Endothelial cell of umbilical vein (primary cell): ENCODE measurements at regions of chr14 and their contacts with region 1.

Region 1: DNA sequence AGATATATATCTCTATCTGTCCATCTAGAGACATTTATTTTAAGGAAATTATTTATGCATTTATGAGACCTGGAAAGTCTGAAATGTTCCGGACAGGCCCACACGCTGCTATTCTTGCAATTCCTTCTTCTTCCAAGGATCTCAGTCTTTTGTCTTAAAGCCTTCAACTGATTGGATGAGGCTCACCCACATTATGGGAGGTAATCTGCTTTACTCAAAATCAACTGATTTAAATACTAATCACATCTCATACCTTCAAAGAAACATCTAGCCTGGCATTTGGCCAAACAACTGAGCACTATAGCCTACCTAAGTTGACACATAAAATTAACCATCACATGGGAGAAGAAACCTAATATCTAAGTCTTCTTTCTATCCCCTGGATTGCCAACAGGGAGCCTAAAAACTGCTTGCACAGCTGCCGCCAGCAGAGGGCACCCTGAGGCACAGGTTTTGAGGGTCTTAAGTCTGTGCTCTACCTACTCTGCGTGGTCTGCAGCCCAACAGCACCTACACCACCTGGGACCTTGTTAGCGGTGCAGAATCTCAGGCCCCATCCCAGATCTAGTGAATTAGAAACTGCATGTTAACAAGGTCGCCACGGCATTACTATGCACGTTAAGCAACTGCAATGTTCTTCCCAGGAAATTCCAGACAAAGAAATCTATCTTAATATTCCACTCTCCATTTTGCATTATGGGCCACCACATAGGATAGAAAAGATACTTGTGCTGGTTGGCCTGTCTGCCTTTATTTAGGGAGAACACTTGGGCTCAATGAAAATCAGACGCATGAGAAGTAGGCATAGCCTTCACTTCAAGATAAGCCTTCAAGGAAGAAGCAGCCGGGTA is 249.7 kb downstream of the FOXG1 start:
- DNase-seq: peak; percentile 60
- H3K4me3 ChIP-seq: no peak overlapping the region
- H3K27ac ChIP-seq: no peak overlapping the region
- H3K4me1 ChIP-seq: no peaks in the 10 kb centered on the region
- H3K27me3 ChIP-seq: peaks cover 0 to 4% of the 10 kb centered on the region in 2 experiments
- CTCF ChIP-seq: peak; percentile 69 to 75
- POLR2A ChIP-seq: no peak

Region 2: DNA sequence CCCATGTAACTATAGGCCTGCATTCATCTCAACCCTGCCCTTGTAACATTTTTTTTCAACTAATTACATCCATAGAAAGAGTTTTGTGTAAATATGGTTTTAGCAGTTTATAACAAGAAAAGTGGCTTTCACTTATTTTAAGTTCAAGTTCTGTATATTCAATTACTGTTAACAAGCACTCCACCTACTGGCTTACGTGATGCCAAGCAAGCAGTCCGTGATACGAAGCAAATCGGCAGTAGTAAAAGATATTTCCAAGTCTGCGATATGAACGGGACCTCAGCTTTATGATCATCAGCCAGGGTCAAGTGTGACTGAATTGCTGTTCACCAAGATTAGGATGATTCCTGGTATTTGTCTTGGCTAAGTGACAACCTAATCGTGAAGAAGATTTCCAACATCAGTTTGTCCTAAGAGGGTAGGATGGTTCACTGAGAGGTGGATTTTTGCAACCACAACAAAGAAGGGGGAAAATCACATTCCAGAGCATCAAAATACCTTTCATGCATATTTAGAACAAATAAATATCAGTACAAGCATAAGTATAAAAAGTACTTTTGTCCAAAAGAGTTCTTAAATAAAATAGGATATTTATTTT is 206.5 kb after region 1 on chr14:
- CTCF ChIA-PET with region 1: no interaction called
- POLR2A ChIA-PET with region 1: no interaction called
- dilution Hi-C with region 1: no loop called
- intact Hi-C with region 1: loop called (anchors 1 kb)
- DNase-seq: peak; percentile 44
- H3K4me3 ChIP-seq: no peak overlapping the region
- H3K27ac ChIP-seq: no peak overlapping the region
- H3K4me1 ChIP-seq: no peaks in the 10 kb centered on the region
- H3K27me3 ChIP-seq: no peaks in the 10 kb centered on the region
- CTCF ChIP-seq: peak; percentile 43 to 52
- POLR2A ChIP-seq: no peak

Region 3: DNA sequence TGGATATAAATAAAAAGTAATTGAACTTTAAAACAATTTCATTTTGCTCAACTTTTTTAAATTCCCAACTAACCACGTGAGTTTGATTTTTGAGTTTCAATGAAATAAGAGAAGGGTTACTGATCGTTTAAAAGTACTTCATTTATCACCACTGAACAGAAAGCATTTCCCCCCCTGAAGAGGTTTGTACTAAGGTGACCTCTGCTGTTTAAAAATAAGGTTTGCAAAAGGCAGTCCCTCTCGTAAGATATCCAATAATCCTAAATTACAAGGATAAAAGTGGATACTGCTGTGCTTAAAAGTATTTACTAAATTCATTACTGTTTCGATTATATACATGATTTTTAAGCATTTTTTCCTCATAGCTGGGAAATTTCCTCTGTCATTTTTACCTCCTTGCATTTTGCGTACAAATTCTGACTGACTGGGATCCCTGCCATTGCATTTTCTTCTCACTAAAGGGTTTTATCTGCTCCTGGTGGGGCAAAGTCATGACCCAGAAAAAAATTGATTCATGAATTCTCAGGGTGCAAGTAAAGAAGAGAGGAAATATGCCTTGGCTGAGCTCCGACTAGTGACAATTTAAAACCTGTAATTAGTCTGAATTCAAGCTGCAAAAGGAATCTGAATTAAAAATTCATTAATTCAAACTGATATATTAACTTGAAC is 447.6 kb after region 1 on chr14:
- CTCF ChIA-PET with region 1: interaction called, 4 read pairs
- POLR2A ChIA-PET with region 1: no interaction called
- dilution Hi-C with region 1: no loop called
- intact Hi-C with region 1: loop called (anchors 1 kb)
- DNase-seq: no peak
- H3K4me3 ChIP-seq: no peak overlapping the region
- H3K27ac ChIP-seq: no peak overlapping the region
- H3K4me1 ChIP-seq: no peaks in the 10 kb centered on the region
- H3K27me3 ChIP-seq: peaks cover 0 to 2% of the 10 kb centered on the region in 2 experiments
- CTCF ChIP-seq: no peak
- POLR2A ChIP-seq: no peak

Region 4: DNA sequence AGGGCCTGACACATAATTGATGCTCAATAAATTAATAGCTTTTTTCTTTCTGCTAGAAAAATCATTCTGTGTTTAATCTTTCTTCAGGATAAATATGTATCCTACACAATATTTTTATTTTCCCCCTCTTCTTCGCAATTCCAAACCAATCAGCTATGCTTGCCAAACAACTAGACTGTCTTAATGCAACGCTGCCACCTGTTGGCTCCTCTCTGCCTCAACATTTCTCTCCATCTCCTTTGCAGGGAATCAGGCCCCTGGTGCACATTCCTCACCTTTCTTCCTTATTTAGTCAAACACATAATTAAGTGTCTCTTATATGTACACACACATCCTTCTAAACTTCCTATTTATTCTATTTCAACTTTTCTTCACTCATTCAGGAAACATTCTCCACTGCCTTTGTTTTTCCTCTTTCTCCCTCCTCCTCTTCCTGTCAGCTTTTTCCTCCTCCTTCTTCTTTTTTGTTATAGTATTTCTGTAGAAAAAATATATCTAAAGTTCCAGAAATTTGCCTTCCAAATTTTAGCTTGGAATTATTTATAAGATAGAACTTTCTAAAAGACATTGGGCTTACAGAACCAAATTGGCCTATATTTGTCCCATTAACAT is 505.4 kb after region 1 on chr14:
- CTCF ChIA-PET with region 1: interaction called, 12 read pairs
- POLR2A ChIA-PET with region 1: no interaction called
- dilution Hi-C with region 1: no loop called
- intact Hi-C with region 1: loop called (anchors 1 kb)
- DNase-seq: peak; percentile 6
- H3K4me3 ChIP-seq: no peak overlapping the region
- H3K27ac ChIP-seq: no peak overlapping the region
- H3K4me1 ChIP-seq: no peaks in the 10 kb centered on the region
- H3K27me3 ChIP-seq: no peaks in the 10 kb centered on the region
- CTCF ChIP-seq: peak; percentile 28 to 42
- POLR2A ChIP-seq: no peak

Region 5: DNA sequence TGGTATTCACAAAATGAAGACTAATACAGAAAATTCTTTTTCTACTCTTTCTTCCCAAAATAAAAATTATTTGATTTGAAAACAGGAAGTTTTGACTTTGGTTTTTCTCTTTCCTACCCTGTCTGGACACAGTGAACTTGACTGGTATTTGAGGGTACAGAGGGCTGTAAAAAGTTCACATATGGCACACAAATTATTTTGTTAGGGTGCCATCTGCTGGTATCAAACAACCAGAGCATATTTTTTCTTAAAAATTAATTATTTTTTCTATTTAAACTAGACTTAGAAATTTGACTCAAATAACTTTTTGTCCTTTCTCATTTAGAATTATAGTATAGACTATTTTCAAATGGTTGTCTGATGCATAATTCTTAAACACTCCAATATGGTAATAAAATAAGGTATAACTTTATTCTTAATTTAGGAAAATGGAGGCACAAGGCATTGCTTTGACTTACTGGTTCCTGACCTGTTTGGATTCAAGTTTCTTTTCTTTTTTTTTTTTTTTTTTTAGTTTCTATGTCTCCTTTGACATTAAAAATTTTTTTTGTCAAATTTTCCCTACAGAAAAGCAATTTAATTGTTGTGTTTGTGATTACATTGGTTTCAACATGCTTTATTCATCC is 520.7 kb after region 1 on chr14:
- CTCF ChIA-PET with region 1: no interaction called
- POLR2A ChIA-PET with region 1: no interaction called
- dilution Hi-C with region 1: no loop called
- intact Hi-C with region 1: loop called (anchors 5 kb)
- DNase-seq: peak; percentile 33
- H3K4me3 ChIP-seq: no peak overlapping the region
- H3K27ac ChIP-seq: no peak overlapping the region
- H3K4me1 ChIP-seq: no peaks in the 10 kb centered on the region
- H3K27me3 ChIP-seq: peaks cover 4 to 23% of the 10 kb centered on the region in 2 experiments
- CTCF ChIP-seq: peak; percentile 4 to 8
- POLR2A ChIP-seq: no peak